Prostate gland (tissue), 2 donors: ENCODE measurements at regions of chr1 and their contacts with region 1.

Region 1: DNA sequence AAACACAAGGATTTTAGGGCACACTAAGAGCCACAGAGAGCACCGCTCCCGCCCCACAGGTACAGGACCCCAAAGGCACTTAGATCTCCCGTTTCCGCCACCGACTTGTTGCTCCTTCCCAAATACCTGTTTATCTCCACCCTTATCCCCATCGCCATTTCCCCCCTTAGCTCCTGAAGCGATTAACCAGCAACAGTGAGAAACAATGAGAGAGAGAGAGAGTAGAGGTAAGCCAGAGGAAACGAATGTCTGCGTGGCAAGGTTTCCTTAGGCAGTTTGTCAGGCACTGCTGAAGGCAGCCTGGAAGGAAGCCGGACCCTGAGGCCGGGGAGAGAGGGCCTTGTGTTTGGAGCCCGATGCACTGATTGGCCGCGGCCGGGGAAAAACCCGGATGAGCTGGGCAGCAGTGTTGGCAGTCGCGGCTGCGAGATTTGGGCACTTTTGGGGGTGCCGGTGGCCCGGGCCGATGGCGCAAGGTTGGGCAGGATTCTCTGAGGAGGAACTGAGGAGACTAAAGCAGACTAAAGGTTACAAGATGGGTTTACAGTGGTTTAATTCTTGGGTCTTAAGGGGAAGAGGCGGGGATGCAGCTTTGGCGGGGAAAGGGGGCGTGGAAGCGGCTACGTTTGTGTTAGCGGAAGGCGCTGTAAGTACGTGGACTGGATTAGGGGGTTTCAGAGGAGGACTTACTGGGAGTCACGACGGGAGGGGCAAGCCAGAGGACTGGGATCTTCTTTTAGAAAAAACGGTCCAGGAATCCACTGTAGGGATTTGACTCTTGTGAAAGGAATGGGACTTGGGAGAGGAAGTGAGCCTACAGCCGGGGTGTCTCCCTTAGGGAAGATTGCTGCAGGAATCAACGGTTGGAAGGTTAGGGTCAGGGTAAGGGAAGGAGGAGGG is at the start of gene GORAB:
- DNase-seq: peak; percentile 90
- H3K4me3 ChIP-seq: peak within 1 kb of the TSS; percentile 45 to 56
- H3K27ac ChIP-seq: peak within 1 kb of the TSS; percentile 80 to 81
- H3K4me1 ChIP-seq: no peaks in the 10 kb centered on the region
- H3K27me3 ChIP-seq: no peaks in the 10 kb centered on the region
- CTCF ChIP-seq: no peak
- POLR2A ChIP-seq: peak; percentile 70
- total RNA-seq, gene GORAB: 8.7 to 12.2 TPM

Region 2: GRCh38 chr1:169941982-169942830 is 589.8 kb before region 1 on chr1:
- intact Hi-C with region 1: loop called (anchors 10 kb)
- DNase-seq: peak; percentile 55
- H3K4me3 ChIP-seq: no peak overlapping the region
- H3K27ac ChIP-seq: no peak overlapping the region
- H3K4me1 ChIP-seq: no peaks in the 10 kb centered on the region
- H3K27me3 ChIP-seq: no peaks in the 10 kb centered on the region
- CTCF ChIP-seq: no peak
- POLR2A ChIP-seq: no peak

Region 3: GRCh38 chr1:170214117-170215032 is 317.6 kb before region 1 on chr1:
- intact Hi-C with region 1: loop called (anchors 10 kb)
- DNase-seq: no peak
- H3K4me3 ChIP-seq: no peak overlapping the region
- H3K27ac ChIP-seq: no peak overlapping the region
- H3K4me1 ChIP-seq: no peaks in the 10 kb centered on the region
- H3K27me3 ChIP-seq: no peaks in the 10 kb centered on the region
- CTCF ChIP-seq: no peak
- POLR2A ChIP-seq: no peak

Region 4: DNA sequence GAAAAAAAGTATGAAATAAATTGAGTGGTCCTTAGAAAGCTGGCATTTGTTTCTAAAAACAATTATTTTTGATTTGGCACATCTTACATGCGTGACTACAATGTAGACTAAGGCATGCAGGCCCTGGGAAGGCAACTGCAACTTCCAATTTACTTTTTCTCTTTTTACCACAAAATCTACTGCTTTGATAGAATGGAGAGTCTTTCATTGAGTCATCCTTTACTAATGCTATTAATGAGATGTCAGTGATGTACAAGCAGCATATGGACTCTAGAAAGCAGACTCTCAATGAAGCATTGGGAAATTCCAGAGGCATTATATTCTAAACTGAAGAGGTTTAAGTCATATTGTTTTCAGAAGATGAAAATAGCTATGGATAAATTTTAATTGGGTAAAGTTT is 102.3 kb after region 1 on chr1:
- intact Hi-C with region 1: no loop called
- DNase-seq: no peak
- H3K4me3 ChIP-seq: no peak overlapping the region
- H3K27ac ChIP-seq: no peak overlapping the region
- H3K4me1 ChIP-seq: no peaks in the 10 kb centered on the region
- H3K27me3 ChIP-seq: no peaks in the 10 kb centered on the region
- CTCF ChIP-seq: no peak
- POLR2A ChIP-seq: no peak

Region 5: DNA sequence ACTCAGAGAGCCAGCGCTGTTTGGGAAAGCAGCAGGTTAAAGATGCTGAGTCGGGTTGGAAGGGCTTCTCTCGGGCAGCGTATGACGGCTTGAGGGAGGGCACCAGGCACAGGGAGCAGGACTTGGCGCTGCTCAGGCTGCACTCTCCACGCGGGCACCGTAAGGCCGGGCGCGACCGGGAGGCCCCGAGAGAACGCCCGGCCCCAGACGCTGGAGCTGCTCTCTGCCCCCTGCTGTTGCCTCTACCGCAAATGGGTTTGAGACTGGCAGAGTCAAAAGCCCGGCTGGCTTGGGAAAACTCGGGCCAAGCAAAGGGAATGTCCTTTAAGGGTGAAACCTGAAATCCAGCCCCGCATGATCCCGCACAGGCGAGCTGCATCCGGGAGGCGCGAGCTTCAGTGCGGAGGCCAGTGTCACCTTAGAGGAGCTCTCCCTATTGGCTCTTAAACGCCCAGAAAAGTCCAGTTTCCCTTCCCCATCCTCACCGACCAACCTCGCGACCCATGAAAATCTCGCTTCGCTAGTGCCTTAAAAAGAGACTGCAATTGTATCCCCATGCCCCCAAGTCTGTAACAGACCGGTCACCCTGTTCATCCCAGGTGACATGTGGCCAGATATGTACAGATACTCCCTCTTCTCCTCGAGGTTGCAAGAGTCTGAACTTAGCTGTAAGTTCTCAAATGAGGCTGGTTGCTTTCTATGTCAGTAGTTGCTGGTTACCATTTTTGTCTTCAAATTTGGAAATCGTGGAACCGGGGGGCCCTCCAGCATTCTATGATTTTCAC is 133.0 kb after region 1 on chr1:
- intact Hi-C with region 1: loop called (anchors 2 kb)
- DNase-seq: no peak
- H3K4me3 ChIP-seq: peak overlapping the region; percentile 45 to 56
- H3K27ac ChIP-seq: peak overlapping the region; percentile 82 to 83
- H3K4me1 ChIP-seq: no peaks in the 10 kb centered on the region
- H3K27me3 ChIP-seq: no peaks in the 10 kb centered on the region
- CTCF ChIP-seq: no peak
- POLR2A ChIP-seq: no peak